ENCODE measurements at regions of chr6 and their contacts with region 1.

Region 1: GRCh38 chr6:133568970-133569889 is 319.7 kb upstream of the TCF21 start:
- DNase-seq: no peak
- ATAC-seq: peak; percentile 88
- H3K4me3 ChIP-seq: peak overlapping the region; percentile 37 to 94
- H3K27ac ChIP-seq: no peak overlapping the region
- H3K4me1 ChIP-seq: no peaks in the 10 kb centered on the region
- H3K27me3 ChIP-seq: no peaks in the 10 kb centered on the region

Region 2: GRCh38 chr6:133837801-133838349 is 268.6 kb after region 1 on chr6:
- intact Hi-C with region 1: loop called in 1 of 2 experiments (anchors 5 kb)
- DNase-seq: peak; percentile 64 to 81
- ATAC-seq: peak; percentile 59
- H3K4me3 ChIP-seq: peak overlapping the region; percentile 22 to 60
- H3K27ac ChIP-seq: no peak overlapping the region
- H3K4me1 ChIP-seq: no peaks in the 10 kb centered on the region
- H3K27me3 ChIP-seq: no peaks in the 10 kb centered on the region

Region 3: DNA sequence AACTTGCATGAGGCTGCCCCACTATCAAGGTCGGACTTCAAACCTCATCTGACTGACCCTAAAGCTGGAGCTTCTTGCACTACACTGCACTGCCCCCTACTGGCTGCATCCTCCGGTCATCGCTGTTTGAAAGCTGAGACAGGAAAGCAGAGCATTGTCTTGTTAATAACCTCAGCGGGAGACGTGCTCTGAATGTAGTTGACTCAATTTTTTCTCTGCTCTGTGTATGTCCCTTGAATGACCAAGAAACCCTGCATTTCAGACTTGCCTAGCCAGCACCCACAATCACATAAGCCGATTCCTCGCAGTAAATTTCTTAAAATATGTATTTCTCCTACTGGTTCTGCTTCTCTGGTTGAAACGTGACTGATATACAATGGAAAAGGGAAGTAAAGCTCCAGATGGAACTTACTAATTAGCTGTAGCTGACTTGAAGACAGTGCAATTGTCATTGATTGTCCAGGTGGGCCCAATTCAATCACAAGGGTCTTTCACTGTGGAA is 347.5 kb after region 1 on chr6:
- intact Hi-C with region 1: loop called (anchors 1 to 2 kb)
- DNase-seq: peak; percentile 90 to 96
- ATAC-seq: peak; percentile 86
- H3K4me3 ChIP-seq: no peak overlapping the region
- H3K27ac ChIP-seq: no peak overlapping the region
- H3K4me1 ChIP-seq: peaks cover 0 to 3% of the 10 kb centered on the region in 2 donors
- H3K27me3 ChIP-seq: no peaks in the 10 kb centered on the region

Region 4: GRCh38 chr6:134063966-134064445 is 494.8 kb after region 1 on chr6:
- intact Hi-C with region 1: loop called in 1 of 2 experiments (anchors 10 kb)
- DNase-seq: peak in 1 of 2 donors; percentile 62
- ATAC-seq: peak; percentile 88
- H3K4me3 ChIP-seq: no peak overlapping the region
- H3K27ac ChIP-seq: no peak overlapping the region
- H3K4me1 ChIP-seq: peaks cover 0 to 15% of the 10 kb centered on the region in 2 donors
- H3K27me3 ChIP-seq: no peaks in the 10 kb centered on the region

Region 5: GRCh38 chr6:134097114-134097707 is 528.0 kb after region 1 on chr6:
- intact Hi-C with region 1: loop called in 1 of 2 experiments (anchors 5 kb)
- DNase-seq: no peak
- ATAC-seq: peak; percentile 70
- H3K4me3 ChIP-seq: no peak overlapping the region
- H3K27ac ChIP-seq: no peak overlapping the region
- H3K4me1 ChIP-seq: no peaks in the 10 kb centered on the region
- H3K27me3 ChIP-seq: no peaks in the 10 kb centered on the region

Measured in aorta (tissue), 5 donors.